A549 (cell line): ENCODE measurements at regions of chr11 and their contacts with region 1.

Region 1: DNA sequence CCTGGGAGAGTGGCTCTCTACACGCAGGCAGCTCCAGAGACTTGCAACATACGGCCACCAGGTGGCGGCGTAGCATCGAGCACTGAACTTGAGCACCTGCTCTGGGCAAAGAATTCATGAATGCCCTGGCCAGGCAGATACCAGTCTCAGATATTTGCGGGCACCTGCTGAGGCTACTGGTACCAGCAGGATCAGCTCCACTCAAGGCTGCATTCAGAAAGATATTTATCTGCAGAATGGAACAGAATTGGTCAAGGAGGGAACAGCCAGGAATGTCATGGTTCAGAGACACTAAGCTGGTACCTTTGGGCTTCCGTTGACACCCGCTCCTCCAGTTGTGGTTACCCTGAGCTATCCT is 10.8 kb upstream of the CCDC86 start:
- DNase-seq: peak; percentile 80 to 83
- ATAC-seq: peak; percentile 93 to 97
- H3K4me3 ChIP-seq: no peak overlapping the region
- H3K27ac ChIP-seq: no peak overlapping the region
- H3K4me1 ChIP-seq: no peaks in the 10 kb centered on the region
- CTCF ChIP-seq: peak; percentile 96
- EP300 ChIP-seq: no peak
- POLR2A ChIP-seq: no peak
- RAD21 ChIP-seq: peak; percentile 90 to 93

Region 2: DNA sequence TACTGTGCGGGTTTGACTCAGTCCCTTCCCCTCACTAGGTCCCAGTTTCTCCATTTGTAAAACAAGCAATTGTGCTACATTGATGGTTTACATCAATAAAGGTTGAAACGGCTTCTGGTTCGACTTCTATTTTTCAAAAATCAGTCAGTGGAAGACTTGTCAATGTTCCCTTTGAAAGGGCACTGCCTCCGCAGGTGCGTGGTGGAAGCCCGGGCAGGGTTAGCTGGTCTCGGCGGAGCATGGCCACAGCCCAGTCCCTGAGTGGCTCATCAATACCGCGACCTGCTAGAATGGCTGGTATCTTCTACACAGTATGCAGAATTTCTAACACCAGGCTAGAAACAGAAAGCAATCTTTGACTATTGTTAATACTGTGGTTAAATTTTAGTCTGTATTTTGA is 29.9 kb before region 1 on chr11:
- CTCF ChIA-PET with region 1: interaction called, 13 read pairs
- POLR2A ChIA-PET with region 1: no interaction called
- DNase-seq: no peak
- ATAC-seq: no peak
- H3K4me3 ChIP-seq: no peak overlapping the region
- H3K27ac ChIP-seq: no peak overlapping the region
- H3K4me1 ChIP-seq: no peaks in the 10 kb centered on the region
- CTCF ChIP-seq: no peak
- EP300 ChIP-seq: no peak
- POLR2A ChIP-seq: no peak
- RAD21 ChIP-seq: no peak

Region 3: DNA sequence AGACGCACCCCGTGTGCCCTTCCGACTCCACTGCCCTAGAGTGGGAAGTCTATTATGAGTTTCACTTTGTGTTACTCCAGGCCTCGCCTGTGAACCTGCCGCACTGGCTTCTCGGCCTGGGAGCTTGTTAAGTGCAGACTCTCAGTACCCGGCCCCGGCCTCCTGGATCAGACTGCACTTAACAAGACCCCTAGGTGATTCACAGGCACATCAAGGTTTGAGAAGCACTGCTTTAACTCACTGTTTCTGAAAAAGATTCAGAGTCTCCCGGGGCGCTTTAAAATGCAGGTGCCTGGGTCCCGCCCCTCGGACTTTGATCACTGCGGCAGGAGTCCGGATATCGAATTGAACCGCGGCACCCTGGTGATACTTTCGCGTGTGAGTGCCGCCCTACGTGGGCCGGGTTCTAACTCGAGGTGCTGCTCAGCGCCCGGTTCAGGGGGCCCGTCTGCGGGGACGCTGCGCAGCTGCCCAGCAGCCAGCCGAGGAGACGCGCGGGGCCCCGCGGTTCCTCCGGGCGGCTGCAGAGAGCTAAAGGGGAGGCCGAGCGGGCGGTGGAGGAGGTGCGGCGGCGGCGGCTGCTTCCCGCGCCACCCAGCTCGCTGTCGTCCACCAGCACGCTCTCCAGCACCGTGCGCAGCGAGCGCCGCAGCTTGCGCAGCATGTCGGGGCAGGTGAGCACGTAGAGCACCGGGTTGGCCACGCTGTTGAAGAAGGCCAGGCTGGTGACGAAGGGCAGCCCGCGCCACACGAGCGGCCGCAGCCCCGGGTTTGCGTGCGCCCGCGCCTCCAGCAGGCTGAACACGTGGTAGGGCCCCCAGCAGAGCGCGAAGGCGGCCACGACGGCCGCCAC is 21.2 kb after region 1 on chr11:
- CTCF ChIA-PET with region 1: interaction called, 21 read pairs
- POLR2A ChIA-PET with region 1: no interaction called
- DNase-seq: no peak
- ATAC-seq: no peak
- H3K4me3 ChIP-seq: no peak overlapping the region
- H3K27ac ChIP-seq: no peak overlapping the region
- H3K4me1 ChIP-seq: no peaks in the 10 kb centered on the region
- CTCF ChIP-seq: no peak
- EP300 ChIP-seq: no peak
- POLR2A ChIP-seq: no peak
- RAD21 ChIP-seq: no peak

Region 4: DNA sequence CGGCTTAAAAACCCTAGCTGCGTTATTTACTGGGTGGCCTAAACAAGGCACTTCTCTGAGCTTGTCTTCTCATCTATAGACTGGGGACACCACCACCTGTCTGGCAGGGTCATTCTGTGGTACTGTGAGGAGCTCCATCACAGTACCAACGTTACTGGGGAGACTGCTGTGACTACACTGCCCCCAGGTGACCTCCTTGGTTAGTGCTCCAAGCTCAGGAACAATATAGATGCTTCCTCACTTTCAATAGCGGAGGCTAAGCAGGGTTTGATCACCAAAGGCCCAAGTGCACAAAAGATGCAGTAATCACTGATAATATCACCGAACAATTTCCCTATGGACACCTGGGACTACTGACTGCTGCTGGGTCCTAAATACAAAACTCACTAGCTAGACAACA is 56.4 kb after region 1 on chr11:
- CTCF ChIA-PET with region 1: interaction called, 109 read pairs
- POLR2A ChIA-PET with region 1: interaction called, 4 read pairs
- DNase-seq: peak; percentile 41 to 53
- ATAC-seq: peak; percentile 94 to 96
- H3K4me3 ChIP-seq: no peak overlapping the region
- H3K27ac ChIP-seq: no peak overlapping the region
- H3K4me1 ChIP-seq: no peaks in the 10 kb centered on the region
- CTCF ChIP-seq: peak; percentile 49
- EP300 ChIP-seq: no peak
- POLR2A ChIP-seq: no peak
- RAD21 ChIP-seq: peak; percentile 62 to 73

Region 5: DNA sequence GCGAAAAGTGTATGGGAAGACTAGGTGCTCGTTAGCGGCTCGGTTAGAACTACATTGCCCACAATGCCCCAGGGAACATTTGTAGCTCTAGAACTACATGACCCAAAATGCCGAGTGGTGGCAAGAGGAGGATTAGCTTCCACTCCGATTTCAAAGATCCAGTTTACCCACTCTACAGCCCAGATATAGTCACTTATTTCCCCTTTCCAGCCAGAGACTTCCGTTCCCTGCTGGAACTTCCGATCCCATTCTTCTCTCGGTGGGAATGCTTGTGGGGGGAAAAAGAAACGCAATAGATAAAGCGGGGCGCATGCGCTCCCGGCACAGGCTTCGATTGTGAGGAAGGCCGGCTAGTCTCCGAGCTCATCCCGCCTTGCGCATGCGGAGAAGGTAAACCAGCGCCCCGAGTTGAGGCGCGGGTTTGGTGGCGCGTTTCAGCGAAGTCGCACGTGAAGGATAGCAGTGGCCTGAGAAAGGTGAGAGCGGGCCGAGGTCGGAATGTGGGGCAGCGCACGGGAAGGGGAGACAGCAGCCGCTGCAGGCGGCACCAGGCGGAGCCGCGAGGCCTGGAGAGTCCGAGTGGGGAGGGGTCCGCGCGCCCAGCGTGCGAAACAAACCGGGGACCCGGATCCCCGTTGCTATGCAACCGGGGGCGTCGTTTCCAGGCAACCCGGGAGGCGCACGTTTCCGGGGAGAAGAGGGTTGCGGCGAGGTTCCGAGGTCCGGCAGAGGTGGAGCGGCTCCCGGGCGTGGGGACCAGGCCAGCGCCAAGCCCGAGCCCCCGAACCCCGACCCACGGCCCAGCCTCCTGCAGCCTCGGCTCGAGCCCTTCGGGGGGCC is 82.9 kb after region 1 on chr11 and contains the start of gene TMEM109:
- CTCF ChIA-PET with region 1: interaction called, 11 read pairs
- POLR2A ChIA-PET with region 1: no interaction called
- DNase-seq: peak; percentile 87 to 94
- ATAC-seq: peak; percentile 79 to 89
- H3K4me3 ChIP-seq: peak within 1 kb of the TSS; percentile 76
- H3K27ac ChIP-seq: peak within 1 kb of the TSS; percentile 91 to 94
- H3K4me1 ChIP-seq: peaks cover 21% of the 10 kb centered on the region
- CTCF ChIP-seq: no peak
- EP300 ChIP-seq: no peak
- POLR2A ChIP-seq: peak; percentile 71
- RAD21 ChIP-seq: no peak
- polyA plus RNA-seq, gene TMEM109: 40.9 and 58.0 TPM in 2 replicates

Region 6: DNA sequence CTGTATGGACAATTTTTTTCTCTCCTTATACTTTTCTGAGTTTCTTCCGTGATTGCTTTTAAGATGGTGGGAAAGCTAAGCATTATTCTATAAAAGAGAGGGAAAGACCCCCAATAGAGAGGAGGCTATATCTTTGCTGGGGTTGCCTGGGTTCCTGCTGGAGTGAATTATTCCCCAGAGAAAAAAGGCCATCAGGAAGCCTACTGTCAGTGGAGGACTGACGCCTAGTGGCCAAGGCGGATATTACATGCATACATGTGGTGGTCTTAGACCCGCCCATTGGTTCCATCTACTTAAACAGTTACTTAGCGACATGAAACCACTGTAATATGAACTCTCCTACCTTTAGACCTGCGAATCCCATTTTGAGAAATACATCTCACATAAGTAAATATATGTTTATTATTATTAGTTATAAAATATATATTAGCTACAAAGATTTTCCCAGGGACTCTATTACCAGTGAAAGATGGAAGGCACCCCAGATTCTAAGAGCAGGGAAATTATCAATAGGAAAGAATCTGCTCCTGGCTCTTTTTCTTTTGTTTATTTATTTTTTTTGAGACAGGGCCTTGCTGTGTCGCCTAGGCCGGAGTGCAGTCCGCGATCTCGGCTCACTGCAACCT is 356.5 kb after region 1 on chr11:
- CTCF ChIA-PET with region 1: interaction called, 29 read pairs
- POLR2A ChIA-PET with region 1: no interaction called
- DNase-seq: peak; percentile 69 to 82
- ATAC-seq: peak; percentile 59 to 94; a peak in 5 of 6 replicates
- H3K4me3 ChIP-seq: no peak overlapping the region
- H3K27ac ChIP-seq: no peak overlapping the region
- H3K4me1 ChIP-seq: no peaks in the 10 kb centered on the region
- CTCF ChIP-seq: peak; percentile 88
- EP300 ChIP-seq: no peak
- POLR2A ChIP-seq: no peak
- RAD21 ChIP-seq: peak; percentile 83 to 92